ENCODE measurements at regions of chrX and their contacts with region 1.

Region 1: GRCh38 chrX:149962859-149963757 is 24.8 kb upstream of the EOLA2 start:
- ATAC-seq: peak; percentile 89 to 100 (median 98)
- H3K4me3 ChIP-seq: no peak overlapping the region
- H3K27ac ChIP-seq: no peak overlapping the region
- H3K4me1 ChIP-seq: peaks cover 0 to 5% of the 10 kb centered on the region in 2 donors

Region 2: GRCh38 chrX:150062292-150063137 is 99.4 kb after region 1 on chrX:
- in situ Hi-C with region 1: no loop called
- ATAC-seq: peak; percentile 27 to 82 (median 60)
- H3K4me3 ChIP-seq: no peak overlapping the region
- H3K27ac ChIP-seq: no peak overlapping the region
- H3K4me1 ChIP-seq: peaks cover 0 to 5% of the 10 kb centered on the region in 2 donors

Region 3: DNA sequence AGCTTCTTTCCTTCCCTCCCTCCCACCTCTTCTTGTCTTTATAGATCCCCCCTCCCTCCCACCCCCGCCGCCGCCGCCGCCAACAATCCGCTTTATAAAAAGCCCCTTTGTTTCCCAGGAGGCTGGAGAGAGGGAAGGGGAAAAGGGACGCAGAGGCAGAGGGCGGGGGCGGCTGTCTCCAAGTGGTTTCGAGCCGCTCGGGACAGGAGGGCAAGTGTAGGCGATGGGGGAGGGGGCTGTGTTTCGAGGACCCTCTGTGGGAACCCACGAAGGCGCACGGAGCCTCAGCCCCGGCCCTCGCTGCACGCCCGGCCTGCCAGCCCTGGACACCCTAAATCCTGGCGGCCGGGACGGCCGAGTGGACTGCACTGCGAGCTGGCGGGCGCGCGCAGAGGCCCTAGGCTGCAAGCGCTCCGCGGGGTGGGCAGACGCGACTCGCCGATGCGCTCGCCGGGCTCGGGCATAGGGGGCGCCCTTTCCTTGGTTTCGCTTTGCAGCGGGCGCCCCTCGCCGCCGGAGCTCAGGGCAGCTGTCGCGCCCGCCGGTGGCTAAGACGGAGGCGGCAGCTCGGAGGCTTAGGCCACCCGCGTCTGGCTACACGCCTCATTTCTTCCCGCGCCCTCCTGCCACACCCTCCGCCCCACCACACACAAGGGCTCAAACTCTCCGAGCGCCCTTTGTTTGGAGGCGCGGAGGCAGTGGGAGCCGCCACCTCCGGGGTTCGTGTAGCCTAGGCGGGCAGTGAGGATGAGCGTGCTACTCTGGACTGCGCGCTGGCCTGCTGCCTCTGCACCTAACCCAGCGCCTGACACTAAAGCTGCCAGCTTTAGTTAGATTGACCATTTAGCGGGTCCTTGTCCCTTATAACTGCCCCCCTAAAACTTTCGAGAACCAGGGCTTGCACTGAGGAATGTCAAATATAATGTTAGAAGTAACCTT is 402.2 kb after region 1 on chrX:
- in situ Hi-C with region 1: loop called in 2 of 9 experiments (anchors 25 kb)
- ATAC-seq: peak; percentile 21 to 66 (median 59)
- H3K4me3 ChIP-seq: peak overlapping the region; percentile 41 to 64 (median 51)
- H3K27ac ChIP-seq: peak overlapping the region; percentile 60 to 74
- H3K4me1 ChIP-seq: peaks cover 5 to 8% of the 10 kb centered on the region in 2 donors

Region 4: DNA sequence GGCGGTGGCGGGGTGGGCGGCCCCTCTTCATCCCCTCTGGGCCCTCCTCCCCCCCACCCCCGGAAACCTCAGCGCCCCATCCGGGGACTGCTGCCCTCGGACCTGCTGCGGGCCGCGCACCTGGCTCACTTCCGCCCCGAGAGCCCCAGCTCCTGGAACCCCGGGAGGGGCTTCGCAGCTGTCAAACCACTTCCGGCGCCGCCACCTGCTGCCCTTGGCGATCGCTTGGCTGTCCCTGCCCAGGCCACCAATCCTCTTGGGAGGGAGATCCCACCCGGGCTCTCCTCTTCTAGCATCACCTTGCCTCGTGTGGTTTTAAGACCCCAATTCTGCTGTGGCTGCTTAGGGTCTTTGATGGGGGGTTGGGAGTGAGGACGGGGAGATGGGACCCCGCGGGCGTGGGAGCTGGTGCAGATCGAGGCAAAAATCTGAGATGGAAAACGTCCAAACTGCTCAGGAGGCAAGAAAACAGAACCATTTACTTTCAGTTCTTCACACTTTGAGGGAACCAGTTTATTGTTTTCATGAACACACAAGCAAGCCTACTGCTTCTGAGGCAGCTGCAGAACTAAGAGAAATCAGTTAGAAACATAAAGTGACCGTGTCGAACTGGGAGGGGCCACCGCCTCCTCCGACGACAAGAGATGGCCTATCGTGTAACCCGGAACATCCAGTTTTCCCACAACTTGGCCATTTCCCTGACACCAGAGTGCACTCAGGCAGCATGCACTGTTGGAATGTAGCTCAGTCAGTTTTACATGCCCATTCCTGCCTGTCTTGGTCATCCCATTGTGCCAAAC is 730.9 kb after region 1 on chrX:
- in situ Hi-C with region 1: loop called in 4 of 9 experiments (anchors 25 kb)
- ATAC-seq: peak; percentile 52 to 82 (median 72)
- H3K4me3 ChIP-seq: peak overlapping the region; percentile 50 to 97 (median 93)
- H3K27ac ChIP-seq: peak overlapping the region; percentile 96 to 97
- H3K4me1 ChIP-seq: peaks cover 6 to 16% of the 10 kb centered on the region in 2 donors